Right cardiac atrium (tissue), 5 donors: ENCODE measurements at regions of chr7 and their contacts with region 1.

Region 1: DNA sequence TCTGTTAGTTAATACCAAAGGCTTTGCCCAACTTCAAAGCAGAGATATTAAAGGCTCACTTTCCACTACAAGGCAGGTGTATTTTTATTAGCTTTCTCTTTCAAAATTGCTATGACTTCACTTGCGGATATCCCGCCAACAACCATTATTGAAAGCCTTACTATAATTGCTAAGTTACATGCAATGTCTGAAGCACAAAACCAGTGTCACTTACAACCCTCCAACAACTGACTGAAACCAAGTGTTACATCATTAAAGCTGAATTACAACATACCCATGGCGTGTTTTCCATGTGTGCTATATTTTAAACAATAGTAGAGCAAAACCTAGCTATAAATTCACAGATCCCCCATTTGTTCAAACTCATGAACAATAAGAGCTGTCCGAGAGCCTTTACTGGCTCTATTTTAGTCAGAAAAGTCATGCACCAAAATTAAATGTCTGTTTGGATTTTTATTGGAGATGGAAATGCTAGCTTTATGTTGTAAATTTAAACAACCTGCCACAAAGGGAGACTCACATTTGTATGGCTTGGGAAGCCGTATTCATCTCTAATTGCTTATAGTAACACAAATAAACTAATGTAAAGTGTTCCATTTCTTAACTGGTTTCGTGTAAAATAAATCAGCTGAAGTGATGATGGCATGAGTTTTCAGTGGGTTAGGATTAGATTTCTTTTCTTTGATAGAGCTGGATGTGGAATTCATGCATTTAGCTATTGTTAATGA is 227.1 kb downstream of the AGMO start:
- DNase-seq: no peak
- ATAC-seq: no peak
- H3K4me3 ChIP-seq: no peak overlapping the region
- H3K27ac ChIP-seq: no peak overlapping the region
- H3K4me1 ChIP-seq: no peaks in the 10 kb centered on the region
- H3K27me3 ChIP-seq: no peaks in the 10 kb centered on the region

Region 2: DNA sequence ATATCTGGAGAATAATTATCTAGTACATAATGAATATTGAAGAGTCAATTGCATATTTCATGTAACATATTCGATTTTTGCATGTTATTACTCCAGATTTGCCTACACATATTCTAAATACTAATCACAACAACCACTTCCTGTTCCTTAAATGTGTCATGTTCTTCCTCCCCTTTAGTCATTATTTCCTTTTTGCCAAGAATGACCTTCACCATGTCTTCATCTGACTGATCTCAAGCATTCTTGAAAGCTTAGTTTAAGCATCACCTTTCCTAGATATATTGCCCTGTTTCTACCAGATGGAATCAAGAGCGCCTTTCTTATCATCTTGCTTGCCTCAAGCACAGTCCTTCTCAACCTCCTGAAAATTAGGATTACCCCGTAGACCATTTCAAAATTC is 375.3 kb after region 1 on chr7:
- intact Hi-C with region 1: loop called in 1 of 4 experiments (anchors 10 kb)
- DNase-seq: no peak
- ATAC-seq: no peak
- H3K4me3 ChIP-seq: no peak overlapping the region
- H3K27ac ChIP-seq: no peak overlapping the region
- H3K4me1 ChIP-seq: no peaks in the 10 kb centered on the region
- H3K27me3 ChIP-seq: no peaks in the 10 kb centered on the region

Region 3: DNA sequence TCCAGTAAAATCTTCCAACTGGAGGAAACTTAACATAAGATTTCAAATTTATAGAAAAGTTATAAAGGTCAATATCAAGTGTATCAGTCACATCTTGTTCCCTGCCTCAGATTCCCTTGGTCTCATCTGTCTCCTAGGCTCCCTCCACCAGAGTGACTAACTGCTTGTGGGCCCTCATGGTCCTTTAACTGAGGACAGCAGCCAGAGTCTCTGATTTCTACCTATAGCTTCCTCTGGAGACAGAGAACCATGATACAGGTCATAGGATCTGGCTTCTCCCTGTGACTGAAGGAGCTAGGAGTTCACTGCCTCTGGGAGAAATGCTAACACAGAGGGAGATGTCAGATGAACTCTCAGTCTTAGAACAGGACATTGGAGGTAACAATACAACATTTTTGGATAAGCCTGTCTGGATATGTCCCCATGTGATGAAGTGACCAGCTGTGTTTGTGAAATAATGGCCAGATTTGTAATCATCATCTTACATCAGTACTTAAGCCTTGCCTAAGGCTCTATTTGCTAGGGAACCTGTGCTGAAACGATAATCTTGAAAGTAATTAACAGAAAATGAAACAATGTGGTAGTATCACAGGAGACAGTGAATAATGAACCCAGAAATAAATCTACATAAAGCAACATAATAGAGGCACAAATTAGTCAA is 1030.3 kb after region 1 on chr7:
- intact Hi-C with region 1: no loop called
- DNase-seq: no peak
- ATAC-seq: no peak
- H3K4me3 ChIP-seq: no peak overlapping the region
- H3K27ac ChIP-seq: no peak overlapping the region
- H3K4me1 ChIP-seq: no peaks in the 10 kb centered on the region
- H3K27me3 ChIP-seq: no peaks in the 10 kb centered on the region